ENCODE measurements at regions of chr1 and their contacts with region 1.

Region 1: DNA sequence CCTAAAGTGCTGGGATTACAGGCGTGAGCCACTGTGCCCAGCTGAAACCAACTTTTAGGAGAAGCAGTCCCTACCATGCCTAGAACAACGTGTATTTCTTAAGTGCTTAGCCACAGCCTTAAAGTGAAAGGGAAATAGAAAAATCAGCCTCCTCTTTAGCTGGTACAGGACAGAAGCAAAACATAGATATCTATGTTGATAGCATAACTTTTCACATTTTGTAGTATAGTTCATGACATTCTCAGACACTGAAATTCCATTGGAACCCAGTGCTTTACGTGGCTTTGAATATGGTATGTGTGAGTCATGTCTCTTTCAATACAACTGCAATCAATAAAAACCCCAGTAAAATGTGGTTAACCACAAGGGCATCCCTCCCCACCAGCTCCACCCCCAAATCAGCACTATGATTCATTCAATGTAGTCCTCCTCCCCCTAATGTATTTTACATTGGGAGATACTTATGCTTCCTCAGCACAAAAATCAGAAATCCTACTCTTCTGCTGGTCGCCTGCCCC is 32.1 kb downstream of the TGFB2 start:
- DNase-seq: no peak
- ATAC-seq: no peak
- H3K4me3 ChIP-seq: no peak overlapping the region
- H3K27ac ChIP-seq: no peak overlapping the region
- H3K4me1 ChIP-seq: peaks cover 44% of the 10 kb centered on the region
- H3K27me3 ChIP-seq: no peaks in the 10 kb centered on the region
- CTCF ChIP-seq: no peak

Region 2: GRCh38 chr1:218459878-218460711 is 82.9 kb after region 1 on chr1:
- intact Hi-C with region 1: loop called in 1 of 2 experiments (anchors 10 kb)
- DNase-seq: no peak
- ATAC-seq: peak; percentile 69 to 72 (median 72)
- H3K4me3 ChIP-seq: peak overlapping the region; percentile 12
- H3K27ac ChIP-seq: peak overlapping the region; percentile 76
- H3K4me1 ChIP-seq: peaks cover 47% of the 10 kb centered on the region
- H3K27me3 ChIP-seq: no peaks in the 10 kb centered on the region
- CTCF ChIP-seq: no peak

Measured in psoas muscle (tissue), 8 donors.